B cell (primary cell): ENCODE measurements at regions of chr3 and their contacts with region 1.

Region 1: GRCh38 chr3:191328962-191329653 is at the start of gene CCDC50:
- DNase-seq: peak; percentile 84
- ATAC-seq: peak; percentile 82
- H3K4me3 ChIP-seq: peak within 1 kb of the TSS; percentile 53 to 96 (median 89)
- H3K4me3 Mint-ChIP-seq: peak within 1 kb of the TSS; percentile 97
- H3K27ac ChIP-seq: peak within 1 kb of the TSS; percentile 89 to 95
- H3K27ac Mint-ChIP-seq: peak within 1 kb of the TSS; percentile 93
- H3K4me1 ChIP-seq: peaks cover 42 to 48% of the 10 kb centered on the region in 2 donors
- H3K4me1 Mint-ChIP-seq: peaks cover 50% of the 10 kb centered on the region
- H3K27me3 ChIP-seq: no peaks in the 10 kb centered on the region
- H3K27me3 Mint-ChIP-seq: no peaks in the 10 kb centered on the region
- CTCF ChIP-seq: no peak
- total RNA-seq, gene CCDC50: 121 and 124 TPM in 2 replicates

Region 2: GRCh38 chr3:191254098-191254873 is 74.8 kb before region 1 on chr3:
- CTCF ChIA-PET with region 1: interaction called, 3 read pairs
- POLR2A ChIA-PET with region 1: interaction called, 13 read pairs
- intact Hi-C with region 1: no loop called
- DNase-seq: no peak
- ATAC-seq: no peak
- H3K4me3 ChIP-seq: peak overlapping the region in 1 of 5 experiments; percentile 8
- H3K4me3 Mint-ChIP-seq: no peak overlapping the region
- H3K27ac ChIP-seq: peak overlapping the region; percentile 31 to 89
- H3K27ac Mint-ChIP-seq: peak overlapping the region; percentile 90
- H3K4me1 ChIP-seq: peaks cover 50 to 64% of the 10 kb centered on the region in 2 donors
- H3K4me1 Mint-ChIP-seq: peaks cover 65% of the 10 kb centered on the region
- H3K27me3 ChIP-seq: no peaks in the 10 kb centered on the region
- H3K27me3 Mint-ChIP-seq: no peaks in the 10 kb centered on the region
- CTCF ChIP-seq: no peak

Region 3: GRCh38 chr3:191296041-191296541 is 33.0 kb before region 1 on chr3:
- CTCF ChIA-PET with region 1: interaction called, 6 read pairs
- POLR2A ChIA-PET with region 1: no interaction called
- intact Hi-C with region 1: loop called (anchors 1 kb)
- DNase-seq: peak; percentile 86
- ATAC-seq: peak; percentile 86
- H3K4me3 ChIP-seq: peak overlapping the region in 1 of 5 experiments; percentile 22
- H3K4me3 Mint-ChIP-seq: no peak overlapping the region
- H3K27ac ChIP-seq: peak overlapping the region; percentile 63 to 75
- H3K27ac Mint-ChIP-seq: no peak overlapping the region
- H3K4me1 ChIP-seq: peaks cover 84% of the 10 kb centered on the region in 2 donors
- H3K4me1 Mint-ChIP-seq: peaks cover 50% of the 10 kb centered on the region
- H3K27me3 ChIP-seq: no peaks in the 10 kb centered on the region
- H3K27me3 Mint-ChIP-seq: no peaks in the 10 kb centered on the region
- CTCF ChIP-seq: no peak

Region 4: DNA sequence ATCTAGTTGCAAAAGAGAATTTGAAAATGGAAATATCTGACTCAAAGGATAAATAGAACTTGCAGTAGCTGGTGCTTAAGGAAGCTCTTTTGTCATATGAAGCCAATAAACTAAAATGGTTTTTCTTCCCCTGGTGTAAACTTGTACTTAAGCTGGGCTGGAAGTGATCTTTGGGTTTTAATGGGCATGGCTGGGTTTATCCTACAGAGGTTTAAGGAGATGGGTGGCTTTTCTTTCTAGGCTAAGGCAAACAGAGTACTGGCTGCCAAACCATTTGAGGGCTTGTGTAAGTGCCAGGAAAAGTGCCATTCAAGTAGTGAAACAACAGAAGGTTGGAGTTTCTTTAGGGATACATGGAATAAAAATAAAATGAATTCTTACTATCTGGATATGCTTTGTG is 13.3 kb after region 1 on chr3:
- CTCF ChIA-PET with region 1: interaction called, 7 read pairs
- POLR2A ChIA-PET with region 1: interaction called, 4 read pairs
- intact Hi-C with region 1: loop called (anchors 1 kb)
- DNase-seq: no peak
- ATAC-seq: no peak
- H3K4me3 ChIP-seq: no peak overlapping the region
- H3K4me3 Mint-ChIP-seq: peak overlapping the region; percentile 4
- H3K27ac ChIP-seq: peak overlapping the region in 1 of 2 donors; percentile 4
- H3K27ac Mint-ChIP-seq: peak overlapping the region; percentile 6
- H3K4me1 ChIP-seq: peaks cover 31 to 66% of the 10 kb centered on the region in 2 donors
- H3K4me1 Mint-ChIP-seq: peaks cover 88% of the 10 kb centered on the region
- H3K27me3 ChIP-seq: no peaks in the 10 kb centered on the region
- H3K27me3 Mint-ChIP-seq: no peaks in the 10 kb centered on the region
- CTCF ChIP-seq: no peak

Region 5: DNA sequence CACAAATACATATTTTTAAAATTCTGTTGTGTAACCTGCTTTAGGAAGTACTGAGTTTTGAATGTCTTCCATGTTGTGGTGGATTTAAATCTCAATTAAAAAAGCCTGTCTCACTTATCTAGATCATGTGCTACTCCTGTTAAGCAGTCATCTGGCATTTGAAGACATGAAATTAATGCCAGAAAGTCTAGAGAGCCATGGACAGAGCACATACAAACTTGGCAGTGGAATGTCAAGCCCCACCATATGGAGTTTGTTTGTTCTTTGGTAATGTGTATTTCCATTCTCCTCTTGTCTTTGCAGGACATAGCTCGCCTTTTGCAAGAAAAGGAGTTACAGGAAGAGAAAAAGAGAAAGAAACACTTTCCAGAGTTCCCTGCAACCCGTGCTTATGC is 40.5 kb after region 1 on chr3:
- CTCF ChIA-PET with region 1: interaction called, 3 read pairs
- POLR2A ChIA-PET with region 1: no interaction called
- intact Hi-C with region 1: loop called (anchors 5 kb)
- DNase-seq: no peak
- ATAC-seq: no peak
- H3K4me3 ChIP-seq: no peak overlapping the region
- H3K4me3 Mint-ChIP-seq: no peak overlapping the region
- H3K27ac ChIP-seq: peak overlapping the region in 1 of 2 donors; percentile 8
- H3K27ac Mint-ChIP-seq: no peak overlapping the region
- H3K4me1 ChIP-seq: peaks cover 8 to 15% of the 10 kb centered on the region in 2 donors
- H3K4me1 Mint-ChIP-seq: peaks cover 19% of the 10 kb centered on the region
- H3K27me3 ChIP-seq: no peaks in the 10 kb centered on the region
- H3K27me3 Mint-ChIP-seq: no peaks in the 10 kb centered on the region
- CTCF ChIP-seq: no peak